ENCODE measurements at regions of chr20 and their contacts with region 1.

Region 1: GRCh38 chr20:25000268-25000821 is 7.8 kb upstream of the APMAP start:
- DNase-seq: peak; percentile 38
- H3K4me3 ChIP-seq: no peak overlapping the region
- H3K27ac ChIP-seq: peak overlapping the region in 3 of 4 donors; percentile 29 to 60 (median 31)
- H3K4me1 ChIP-seq: peaks cover 0 to 23% (median 3%) of the 10 kb centered on the region in 4 donors
- H3K27me3 ChIP-seq: no peaks in the 10 kb centered on the region
- CTCF ChIP-seq: peak in 1 of 5 experiments; percentile 7
- EP300 ChIP-seq: no peak
- POLR2A ChIP-seq: no peak

Region 2: DNA sequence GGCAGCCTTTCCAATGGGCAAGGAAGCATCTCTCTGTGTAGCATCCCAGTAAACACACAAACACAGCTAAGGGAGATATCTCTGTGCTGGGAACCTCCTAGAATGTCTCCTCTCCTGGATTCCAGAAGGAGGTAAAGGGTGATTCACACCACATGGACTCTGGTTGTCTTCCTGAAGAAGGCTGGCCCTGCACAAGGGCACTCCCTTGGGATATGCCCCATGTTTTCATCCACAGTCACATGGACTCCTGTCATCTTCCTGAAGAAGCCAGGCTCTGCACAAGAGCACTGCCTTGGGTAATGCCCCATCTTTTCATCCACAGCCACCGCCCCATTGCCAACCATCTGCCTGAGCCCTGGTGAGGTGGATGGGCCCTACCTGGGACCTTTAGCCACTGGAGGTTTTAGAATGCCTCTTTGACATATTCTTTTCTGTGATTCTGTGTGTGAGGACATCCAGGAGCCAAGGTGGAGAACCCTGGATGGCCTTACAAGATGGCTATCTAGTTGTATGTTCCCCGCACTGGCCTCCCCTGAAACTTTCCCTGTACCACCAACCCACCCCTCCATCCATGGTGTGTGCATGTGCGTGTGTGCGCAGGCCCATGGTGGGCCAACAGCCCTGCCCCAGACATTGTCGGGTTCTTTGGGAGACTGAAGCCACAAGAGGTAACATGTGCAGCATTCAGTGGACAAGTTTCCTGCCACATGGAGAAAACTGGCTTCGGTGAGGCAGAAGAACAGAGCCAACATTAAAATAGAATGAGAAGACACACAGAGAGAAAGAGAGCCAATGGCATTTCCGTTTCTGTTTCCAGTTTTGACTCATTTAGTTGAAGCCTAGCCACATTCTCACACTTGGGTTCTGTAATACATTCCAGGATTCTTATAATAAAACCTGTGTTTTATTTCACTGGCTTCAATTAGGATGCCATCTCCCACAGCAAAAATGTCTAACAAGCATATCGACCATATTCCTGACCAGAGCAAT is 161.5 kb before region 1 on chr20:
- in situ Hi-C with region 1: no loop called
- intact Hi-C with region 1: no loop called
- DNase-seq: no peak
- H3K4me3 ChIP-seq: no peak overlapping the region
- H3K27ac ChIP-seq: no peak overlapping the region
- H3K4me1 ChIP-seq: no peaks in the 10 kb centered on the region
- H3K27me3 ChIP-seq: no peaks in the 10 kb centered on the region
- CTCF ChIP-seq: no peak
- EP300 ChIP-seq: no peak
- POLR2A ChIP-seq: no peak

Region 3: DNA sequence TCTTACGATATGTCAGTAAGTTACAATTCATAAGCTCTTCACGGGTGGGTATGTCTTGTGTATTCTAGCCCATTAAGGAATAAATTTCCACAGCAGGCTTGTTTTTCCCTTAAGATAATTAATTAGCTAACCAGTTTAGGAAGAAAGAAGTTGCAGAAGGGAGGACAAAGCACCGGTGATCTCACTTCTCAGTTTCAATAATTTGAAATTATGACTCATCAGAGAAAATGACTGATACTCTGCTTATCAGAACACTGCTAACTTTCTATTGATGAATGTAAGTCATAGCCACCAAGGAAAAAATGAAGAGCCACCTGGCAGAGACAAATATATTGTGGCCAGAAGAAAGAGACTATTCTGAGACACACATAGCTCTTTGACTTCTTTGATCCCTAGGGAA is 160.1 kb after region 1 on chr20:
- in situ Hi-C with region 1: loop called in 1 of 4 experiments (anchors 25 kb)
- intact Hi-C with region 1: no loop called
- DNase-seq: no peak
- H3K4me3 ChIP-seq: no peak overlapping the region
- H3K27ac ChIP-seq: no peak overlapping the region
- H3K4me1 ChIP-seq: no peaks in the 10 kb centered on the region
- H3K27me3 ChIP-seq: peaks cover under 1% of the 10 kb centered on the region
- CTCF ChIP-seq: no peak
- EP300 ChIP-seq: no peak
- POLR2A ChIP-seq: no peak

Measured in transverse colon (tissue), 4 donors.